Spleen (tissue), 13 donors: ENCODE measurements at regions of chr7 and their contacts with region 1.

Region 1: GRCh38 chr7:108503112-108504026 is 22.6 kb downstream of the PNPLA8 start:
- DNase-seq: no peak
- H3K4me3 ChIP-seq: peak overlapping the region in 1 of 8 donors; percentile 29
- H3K27ac ChIP-seq: peak overlapping the region; percentile 64 to 85 (median 82)
- H3K4me1 ChIP-seq: peaks cover 0 to 40% (median 8%) of the 10 kb centered on the region in 6 donors
- H3K27me3 ChIP-seq: no peaks in the 10 kb centered on the region
- CTCF ChIP-seq: no peak
- POLR2A ChIP-seq: peak in 1 of 3 donors; percentile 46

Region 2: GRCh38 chr7:108181073-108181985 is 322.0 kb before region 1 on chr7:
- intact Hi-C with region 1: loop called (anchors 5 kb)
- DNase-seq: no peak
- H3K4me3 ChIP-seq: no peak overlapping the region
- H3K27ac ChIP-seq: no peak overlapping the region
- H3K4me1 ChIP-seq: peaks cover 0 to 7% (median 0%) of the 10 kb centered on the region in 6 donors
- H3K27me3 ChIP-seq: no peaks in the 10 kb centered on the region
- CTCF ChIP-seq: peak; percentile 38 to 89 (median 68)
- POLR2A ChIP-seq: no peak